ENCODE measurements at regions of chr12 and their contacts with region 1.

Region 1: DNA sequence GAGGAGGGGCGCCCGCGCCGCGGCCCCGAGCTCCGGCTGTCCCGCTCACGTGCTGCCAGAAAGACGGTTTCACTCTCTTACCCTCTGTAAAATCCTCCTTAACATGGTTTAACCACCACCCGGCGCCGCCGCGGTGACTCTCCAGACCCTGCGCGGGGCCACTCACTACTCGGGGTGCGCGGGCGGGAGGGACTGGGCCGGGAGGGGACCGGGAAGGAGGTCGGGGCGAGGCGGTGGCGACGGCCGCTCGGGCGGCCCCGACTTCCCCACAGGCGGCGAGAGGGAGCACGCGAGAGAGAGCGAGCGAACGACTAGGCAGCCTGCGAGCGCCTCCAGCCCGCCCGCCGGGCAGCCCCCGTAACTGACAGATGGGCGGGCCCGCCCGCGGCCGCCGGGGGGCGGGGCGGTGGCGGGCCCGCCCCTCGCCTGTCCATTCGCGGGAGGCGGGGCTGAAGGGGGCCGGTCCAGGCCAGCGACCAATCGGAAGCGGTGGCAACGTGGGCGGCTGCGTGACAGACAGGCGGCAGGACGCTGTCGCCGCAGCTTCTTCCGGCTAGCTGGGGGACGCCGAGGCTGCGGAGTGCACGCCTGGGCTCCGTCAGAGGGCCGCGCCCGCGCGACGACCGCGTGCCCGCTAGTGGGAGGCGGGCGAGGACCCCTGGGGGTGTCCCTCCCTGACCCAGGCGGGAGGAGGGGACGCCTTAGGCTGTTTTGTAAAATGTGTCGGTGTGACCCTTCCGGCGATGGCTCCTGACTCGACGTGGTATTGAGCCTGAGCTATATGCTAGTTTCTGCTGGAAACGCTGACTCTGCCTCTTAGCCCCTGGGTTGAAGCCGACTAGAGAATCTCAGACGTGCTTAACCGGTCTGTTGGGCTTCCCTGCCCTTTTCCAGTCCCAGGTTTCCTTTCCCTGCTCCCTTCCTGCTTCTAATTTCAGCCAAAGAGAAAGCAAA is at the start of gene EEA1:
- DNase-seq: peak; percentile 89 to 96 (median 91)
- ATAC-seq: peak; percentile 93
- H3K4me3 ChIP-seq: peak within 1 kb of the TSS; percentile 71
- H3K4me3 Mint-ChIP-seq: peak within 1 kb of the TSS; percentile 75 to 94 (median 91)
- H3K27ac ChIP-seq: peak within 1 kb of the TSS; percentile 96
- H3K27ac Mint-ChIP-seq: peak within 1 kb of the TSS; percentile 89 to 99 (median 93)
- H3K4me1 ChIP-seq: peaks cover 19 to 23% of the 10 kb centered on the region in 2 donors
- H3K4me1 Mint-ChIP-seq: peaks cover 20 to 53% (median 37%) of the 10 kb centered on the region in 7 donors
- H3K27me3 ChIP-seq: no peaks in the 10 kb centered on the region
- H3K27me3 Mint-ChIP-seq: peaks cover 0 to 6% (median 0%) of the 10 kb centered on the region in 5 donors
- total RNA-seq, gene EEA1: 20.9 to 28.3 (median 27.9) TPM

Region 2: DNA sequence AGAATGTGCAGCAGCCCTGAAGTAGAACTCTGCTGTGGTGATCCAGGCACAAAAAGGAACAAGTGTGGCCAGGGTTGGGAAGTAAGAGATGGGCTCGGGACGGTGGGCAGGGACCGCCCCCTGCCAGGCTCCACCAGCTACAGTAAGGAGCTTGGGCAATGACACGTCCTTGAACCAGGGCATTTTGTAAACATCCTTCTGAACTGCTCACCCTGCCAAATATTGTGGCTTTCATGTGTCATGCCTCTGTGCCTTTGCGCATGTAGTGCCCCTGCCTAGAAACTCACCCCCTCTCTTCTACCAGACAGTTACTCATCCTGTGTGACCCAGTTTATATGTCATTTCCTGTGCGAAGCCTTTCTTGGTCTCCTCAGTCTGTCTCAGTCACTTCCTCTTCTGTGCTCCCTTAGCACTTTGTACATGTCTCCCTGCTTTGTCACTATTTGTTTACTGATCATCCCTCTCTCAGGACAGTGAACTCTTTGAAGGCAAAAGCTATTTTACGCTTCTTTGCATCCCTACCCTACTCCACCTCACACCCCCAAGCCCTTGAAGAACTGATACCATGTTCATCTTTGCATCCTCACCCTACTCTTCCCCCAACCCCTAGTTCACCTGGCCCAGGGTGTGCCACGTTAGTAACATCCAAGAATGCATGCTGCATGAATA is 335.4 kb before region 1 on chr12:
- CTCF ChIA-PET with region 1: no interaction called
- POLR2A ChIA-PET with region 1: no interaction called
- intact Hi-C with region 1: loop called (anchors 5 kb)
- DNase-seq: peak; percentile 51 to 97 (median 92)
- ATAC-seq: peak; percentile 95
- H3K4me3 ChIP-seq: peak overlapping the region; percentile 16
- H3K4me3 Mint-ChIP-seq: peak overlapping the region; percentile 22 to 83 (median 72)
- H3K27ac ChIP-seq: peak overlapping the region; percentile 86
- H3K27ac Mint-ChIP-seq: peak overlapping the region; percentile 90 to 100 (median 98)
- H3K4me1 ChIP-seq: peaks cover 27 to 30% of the 10 kb centered on the region in 2 donors
- H3K4me1 Mint-ChIP-seq: peaks cover 23 to 74% (median 44%) of the 10 kb centered on the region in 7 donors
- H3K27me3 ChIP-seq: no peaks in the 10 kb centered on the region
- H3K27me3 Mint-ChIP-seq: no peaks in the 10 kb centered on the region

Region 3: DNA sequence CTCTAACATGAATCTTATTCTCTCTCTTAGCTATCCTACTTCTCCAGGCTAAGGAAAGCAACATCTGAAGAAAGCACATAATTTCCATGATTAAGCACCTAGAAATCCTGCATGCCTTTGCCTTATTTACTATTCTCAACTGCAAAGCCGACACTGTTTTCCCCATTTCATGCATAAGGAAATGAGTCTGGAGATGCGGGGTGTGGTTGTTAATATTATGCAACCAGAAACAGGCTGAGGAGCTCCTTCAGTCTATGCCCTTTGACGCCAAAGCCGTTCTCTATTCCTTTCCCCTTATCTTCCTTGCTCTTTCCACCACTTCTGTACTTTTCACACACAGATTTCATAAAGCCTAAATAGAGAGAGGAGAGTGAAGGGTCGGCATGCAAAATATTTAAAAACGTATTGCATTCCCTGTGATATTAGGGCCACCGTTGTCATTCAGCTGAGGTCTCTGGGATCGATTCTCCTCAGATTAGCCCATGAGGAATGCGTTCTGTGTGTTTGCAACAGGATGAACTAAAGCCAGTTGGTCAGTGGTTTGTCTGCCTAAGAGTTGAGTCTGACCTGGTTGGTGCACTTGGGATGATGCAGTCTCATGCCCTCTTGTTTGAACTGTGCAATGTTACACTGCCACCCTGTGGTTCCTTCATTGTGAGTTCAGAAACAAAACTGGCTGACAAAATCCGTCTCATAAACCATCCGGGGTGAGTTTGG is 279.6 kb before region 1 on chr12:
- CTCF ChIA-PET with region 1: no interaction called
- POLR2A ChIA-PET with region 1: no interaction called
- intact Hi-C with region 1: no loop called
- DNase-seq: peak; percentile 8 to 70 (median 58)
- ATAC-seq: peak; percentile 96
- H3K4me3 ChIP-seq: no peak overlapping the region
- H3K4me3 Mint-ChIP-seq: peak overlapping the region in 1 of 10 donors; percentile 21
- H3K27ac ChIP-seq: no peak overlapping the region
- H3K27ac Mint-ChIP-seq: peak overlapping the region in 6 of 9 donors; percentile 7 to 79 (median 20)
- H3K4me1 ChIP-seq: no peaks in the 10 kb centered on the region
- H3K4me1 Mint-ChIP-seq: peaks cover 4 to 11% (median 6%) of the 10 kb centered on the region in 7 donors
- H3K27me3 ChIP-seq: no peaks in the 10 kb centered on the region
- H3K27me3 Mint-ChIP-seq: no peaks in the 10 kb centered on the region

Region 4: GRCh38 chr12:92702754-92703679 is 226.2 kb before region 1 on chr12 and contains the start of gene PLEKHG7:
- CTCF ChIA-PET with region 1: no interaction called
- POLR2A ChIA-PET with region 1: no interaction called
- intact Hi-C with region 1: no loop called
- DNase-seq: no peak
- ATAC-seq: no peak
- H3K4me3 ChIP-seq: no peak within 1 kb of the TSS
- H3K4me3 Mint-ChIP-seq: peak within 1 kb of the TSS in 1 of 10 donors; percentile 23
- H3K27ac ChIP-seq: no peak within 1 kb of the TSS
- H3K27ac Mint-ChIP-seq: peak within 1 kb of the TSS in 1 of 9 donors; percentile 47
- H3K4me1 ChIP-seq: no peaks in the 10 kb centered on the region
- H3K4me1 Mint-ChIP-seq: peaks cover 0 to 16% (median 0%) of the 10 kb centered on the region in 7 donors
- H3K27me3 ChIP-seq: no peaks in the 10 kb centered on the region
- H3K27me3 Mint-ChIP-seq: no peaks in the 10 kb centered on the region
- total RNA-seq, gene PLEKHG7: 0.56 TPM in 1 of 5 experiments, not detected in the others

Region 5: GRCh38 chr12:92890601-92891106 is 38.6 kb before region 1 on chr12:
- CTCF ChIA-PET with region 1: interaction called, 5 read pairs
- POLR2A ChIA-PET with region 1: no interaction called
- intact Hi-C with region 1: loop called in 1 of 2 experiments (anchors 5 kb)
- DNase-seq: no peak
- ATAC-seq: no peak
- H3K4me3 ChIP-seq: no peak overlapping the region
- H3K4me3 Mint-ChIP-seq: peak overlapping the region in 1 of 10 donors; percentile 3
- H3K27ac ChIP-seq: no peak overlapping the region
- H3K27ac Mint-ChIP-seq: no peak overlapping the region
- H3K4me1 ChIP-seq: peaks cover 0 to 5% of the 10 kb centered on the region in 2 donors
- H3K4me1 Mint-ChIP-seq: peaks cover 0 to 65% (median 51%) of the 10 kb centered on the region in 7 donors
- H3K27me3 ChIP-seq: no peaks in the 10 kb centered on the region
- H3K27me3 Mint-ChIP-seq: no peaks in the 10 kb centered on the region

Region 6: DNA sequence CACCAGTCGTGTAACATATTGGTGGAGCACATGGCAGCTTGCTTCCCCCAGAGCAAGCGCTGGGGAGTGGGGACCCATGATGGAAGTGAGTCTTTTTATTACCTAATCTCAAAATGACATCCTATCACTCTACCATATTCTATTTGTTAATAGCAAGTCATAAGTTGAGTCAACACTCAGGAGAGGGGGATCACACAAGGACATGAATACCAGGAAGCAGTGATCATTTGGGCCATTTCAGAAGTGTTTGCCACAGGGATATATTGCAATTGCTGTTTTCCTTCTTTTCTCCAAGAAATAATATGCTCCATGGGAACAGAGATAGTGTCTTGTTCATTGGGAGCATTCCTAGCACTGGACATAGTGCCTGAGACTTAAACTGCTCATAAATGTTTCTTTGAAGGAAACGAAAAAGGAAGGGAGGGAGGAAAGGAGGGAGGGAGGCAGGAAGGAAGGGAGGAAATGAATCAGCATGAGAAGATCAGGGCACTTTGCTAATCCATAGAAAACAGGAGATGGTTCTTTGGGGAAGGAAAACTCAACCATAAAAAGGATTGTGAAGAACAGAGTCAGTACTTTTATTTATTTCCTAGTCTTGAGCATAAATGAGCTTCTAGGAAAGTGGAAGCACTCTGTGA is 39.1 kb after region 1 on chr12:
- CTCF ChIA-PET with region 1: no interaction called
- POLR2A ChIA-PET with region 1: no interaction called
- intact Hi-C with region 1: no loop called
- DNase-seq: no peak
- ATAC-seq: no peak
- H3K4me3 ChIP-seq: no peak overlapping the region
- H3K4me3 Mint-ChIP-seq: no peak overlapping the region
- H3K27ac ChIP-seq: no peak overlapping the region
- H3K27ac Mint-ChIP-seq: peak overlapping the region in 1 of 9 donors; percentile 12
- H3K4me1 ChIP-seq: no peaks in the 10 kb centered on the region
- H3K4me1 Mint-ChIP-seq: peaks cover 0 to 7% (median 0%) of the 10 kb centered on the region in 7 donors
- H3K27me3 ChIP-seq: no peaks in the 10 kb centered on the region
- H3K27me3 Mint-ChIP-seq: peaks cover 0 to 2% (median 0%) of the 10 kb centered on the region in 5 donors

Region 7: DNA sequence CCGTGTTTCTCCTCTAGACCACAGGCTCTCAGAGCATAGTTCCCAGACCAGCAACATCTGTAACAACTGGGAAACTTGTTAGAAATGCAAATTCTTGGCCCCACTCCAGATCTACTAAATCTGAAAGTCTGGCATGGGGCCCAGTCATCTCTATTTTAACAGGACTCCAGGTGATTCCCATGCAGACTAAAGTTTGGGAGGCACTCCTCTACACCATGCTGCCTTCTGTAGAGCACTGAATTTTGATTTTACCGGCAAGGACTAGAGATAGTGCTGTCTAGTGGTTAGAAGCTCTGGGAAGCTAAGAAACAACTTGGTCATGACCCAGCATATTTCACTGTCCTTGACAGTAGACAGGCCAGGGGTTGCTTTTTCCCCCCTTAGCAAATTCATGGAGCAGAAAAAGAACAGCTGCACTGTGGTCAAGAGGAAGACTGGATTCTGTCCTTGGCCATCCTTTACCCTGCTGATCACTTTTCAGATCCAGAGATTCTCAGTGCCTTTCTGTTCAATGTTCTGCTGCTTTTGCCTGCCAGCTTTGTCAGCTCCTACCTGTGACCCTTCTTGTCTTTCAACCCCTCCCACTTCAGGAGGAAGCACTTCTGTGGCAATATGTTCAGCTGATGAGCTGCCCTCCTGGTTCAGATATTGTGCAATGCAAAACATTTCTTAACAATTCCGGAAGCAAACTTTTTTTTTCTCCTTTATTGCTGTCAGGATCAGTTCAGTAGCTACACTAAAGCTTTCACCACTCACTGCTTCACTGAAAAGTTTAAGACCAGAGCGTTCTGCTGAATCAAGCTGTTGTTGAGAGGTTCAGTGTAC is 314.7 kb after region 1 on chr12:
- CTCF ChIA-PET with region 1: no interaction called
- POLR2A ChIA-PET with region 1: no interaction called
- intact Hi-C with region 1: loop called in 1 of 2 experiments (anchors 5 kb)
- DNase-seq: peak in 6 of 9 donors; percentile 20 to 60 (median 40)
- ATAC-seq: peak; percentile 68
- H3K4me3 ChIP-seq: no peak overlapping the region
- H3K4me3 Mint-ChIP-seq: peak overlapping the region; percentile 12 to 79 (median 70)
- H3K27ac ChIP-seq: peak overlapping the region; percentile 46
- H3K27ac Mint-ChIP-seq: peak overlapping the region in 8 of 9 donors; percentile 75 to 91 (median 88)
- H3K4me1 ChIP-seq: peaks cover 11 to 23% of the 10 kb centered on the region in 2 donors
- H3K4me1 Mint-ChIP-seq: peaks cover 27 to 65% (median 56%) of the 10 kb centered on the region in 7 donors
- H3K27me3 ChIP-seq: no peaks in the 10 kb centered on the region
- H3K27me3 Mint-ChIP-seq: no peaks in the 10 kb centered on the region

Region 8: DNA sequence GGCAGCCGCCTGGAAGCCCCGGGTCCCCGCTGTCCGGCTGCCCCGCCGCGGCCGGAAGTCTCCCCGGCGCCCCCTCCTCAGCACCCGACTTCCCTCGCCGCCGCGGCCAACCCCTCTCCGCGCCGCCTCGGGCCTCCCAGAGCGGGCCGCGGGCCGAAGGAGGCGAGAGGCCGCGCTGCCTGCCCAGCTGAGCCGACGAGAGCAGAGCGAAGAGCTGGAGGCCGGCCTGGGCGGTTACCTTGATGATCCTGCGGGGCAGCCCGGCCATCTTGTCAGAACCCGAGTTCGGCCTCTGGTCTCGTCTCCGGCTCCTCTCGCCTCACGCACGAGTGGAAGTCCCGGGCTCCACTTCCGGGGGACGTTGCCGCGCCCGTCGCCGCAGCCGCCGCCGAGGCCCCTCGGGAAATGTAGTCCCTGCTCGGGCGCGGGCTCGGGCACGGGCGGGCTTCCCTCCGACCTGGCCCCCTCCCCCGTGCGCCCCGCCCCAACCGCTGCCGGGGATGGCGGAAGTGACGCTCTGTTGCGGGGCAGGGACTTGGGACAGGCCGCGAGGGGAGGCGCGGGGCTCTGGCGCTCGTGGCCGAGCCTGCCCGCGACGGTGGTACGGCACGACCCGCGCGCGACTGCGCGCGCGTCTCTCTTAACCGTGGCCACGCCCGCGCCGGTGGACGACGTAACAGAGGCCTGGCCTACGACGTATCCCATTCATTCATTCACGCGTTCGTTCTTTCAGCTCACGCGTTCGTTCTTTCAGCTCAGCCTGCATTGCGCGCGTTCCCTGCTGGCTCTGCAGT is 512.6 kb after region 1 on chr12 and contains the start of gene UBE2N:
- CTCF ChIA-PET with region 1: no interaction called
- POLR2A ChIA-PET with region 1: interaction called, 8 read pairs
- intact Hi-C with region 1: loop called (anchors 1 kb)
- DNase-seq: peak; percentile 96 to 98 (median 97)
- ATAC-seq: peak; percentile 95
- H3K4me3 ChIP-seq: peak within 1 kb of the TSS; percentile 66
- H3K4me3 Mint-ChIP-seq: peak within 1 kb of the TSS; percentile 89 to 100 (median 97)
- H3K27ac ChIP-seq: peak within 1 kb of the TSS; percentile 98
- H3K27ac Mint-ChIP-seq: peak within 1 kb of the TSS; percentile 96 to 100 (median 98)
- H3K4me1 ChIP-seq: peaks cover 35 to 48% of the 10 kb centered on the region in 2 donors
- H3K4me1 Mint-ChIP-seq: peaks cover 44 to 54% (median 49%) of the 10 kb centered on the region in 7 donors
- H3K27me3 ChIP-seq: no peaks in the 10 kb centered on the region
- H3K27me3 Mint-ChIP-seq: no peaks in the 10 kb centered on the region
- total RNA-seq, gene UBE2N: 76.6 to 180 (median 77.5) TPM

Region 9: DNA sequence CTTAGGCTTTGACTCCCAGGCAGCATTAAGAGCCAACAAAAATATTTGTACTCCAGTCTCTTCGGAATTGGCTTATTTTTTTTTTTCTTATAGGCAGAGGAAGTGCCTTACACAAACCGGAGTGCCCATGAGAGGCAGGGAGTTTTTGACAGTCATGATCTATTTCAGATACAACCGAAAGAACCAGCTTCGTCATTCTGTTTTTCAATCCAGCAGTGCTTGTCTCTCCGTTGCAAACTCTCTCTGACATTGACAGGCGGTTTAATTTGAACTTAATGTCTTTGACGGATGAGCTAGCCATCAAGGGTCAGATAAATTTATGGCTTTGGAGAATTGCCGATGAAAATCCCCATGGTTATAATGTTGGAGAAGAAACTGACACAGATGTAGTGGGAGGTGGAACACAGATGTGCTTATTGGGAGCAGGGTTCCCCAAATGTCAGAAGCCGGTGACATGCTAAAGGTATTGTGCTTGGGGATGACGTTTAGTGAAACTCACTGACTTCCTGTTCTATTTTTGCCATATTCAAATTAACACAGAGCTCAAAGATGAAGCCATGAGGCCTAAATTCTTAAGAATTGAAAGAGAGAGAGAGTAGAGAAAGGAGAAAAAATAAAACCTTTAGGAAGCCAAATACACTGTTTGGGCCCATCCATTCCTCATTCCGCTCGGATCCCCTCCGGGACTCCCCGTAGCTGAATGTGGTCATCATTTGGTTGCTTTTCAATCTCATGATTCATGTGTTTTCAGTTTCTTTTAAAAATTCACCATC is 1278.8 kb after region 1 on chr12:
- CTCF ChIA-PET with region 1: no interaction called
- POLR2A ChIA-PET with region 1: no interaction called
- intact Hi-C with region 1: loop called in 1 of 2 experiments (anchors 5 kb)
- DNase-seq: peak in 8 of 9 donors; percentile 24 to 55 (median 48)
- ATAC-seq: peak; percentile 86
- H3K4me3 ChIP-seq: peak overlapping the region; percentile 58
- H3K4me3 Mint-ChIP-seq: peak overlapping the region; percentile 70 to 87 (median 82)
- H3K27ac ChIP-seq: peak overlapping the region; percentile 61
- H3K27ac Mint-ChIP-seq: peak overlapping the region; percentile 90 to 98 (median 94)
- H3K4me1 ChIP-seq: peaks cover 40 to 49% of the 10 kb centered on the region in 2 donors
- H3K4me1 Mint-ChIP-seq: peaks cover 36 to 58% (median 56%) of the 10 kb centered on the region in 7 donors
- H3K27me3 ChIP-seq: no peaks in the 10 kb centered on the region
- H3K27me3 Mint-ChIP-seq: no peaks in the 10 kb centered on the region